IMR-90 (cell line): ENCODE measurements at regions of chr7 and their contacts with region 1.

Region 1: GRCh38 chr7:85554236-85555178 is 367.7 kb upstream of the SEMA3D start:
- DNase-seq: peak; percentile 82
- ATAC-seq: peak; percentile 84
- H3K4me3 ChIP-seq: no peak overlapping the region
- H3K27ac ChIP-seq: no peak overlapping the region
- H3K4me1 ChIP-seq: no peaks in the 10 kb centered on the region
- H3K27me3 ChIP-seq: no peaks in the 10 kb centered on the region
- CTCF ChIP-seq: peak; percentile 78
- POLR2A ChIP-seq: no peak
- RAD21 ChIP-seq: peak; percentile 82

Region 2: DNA sequence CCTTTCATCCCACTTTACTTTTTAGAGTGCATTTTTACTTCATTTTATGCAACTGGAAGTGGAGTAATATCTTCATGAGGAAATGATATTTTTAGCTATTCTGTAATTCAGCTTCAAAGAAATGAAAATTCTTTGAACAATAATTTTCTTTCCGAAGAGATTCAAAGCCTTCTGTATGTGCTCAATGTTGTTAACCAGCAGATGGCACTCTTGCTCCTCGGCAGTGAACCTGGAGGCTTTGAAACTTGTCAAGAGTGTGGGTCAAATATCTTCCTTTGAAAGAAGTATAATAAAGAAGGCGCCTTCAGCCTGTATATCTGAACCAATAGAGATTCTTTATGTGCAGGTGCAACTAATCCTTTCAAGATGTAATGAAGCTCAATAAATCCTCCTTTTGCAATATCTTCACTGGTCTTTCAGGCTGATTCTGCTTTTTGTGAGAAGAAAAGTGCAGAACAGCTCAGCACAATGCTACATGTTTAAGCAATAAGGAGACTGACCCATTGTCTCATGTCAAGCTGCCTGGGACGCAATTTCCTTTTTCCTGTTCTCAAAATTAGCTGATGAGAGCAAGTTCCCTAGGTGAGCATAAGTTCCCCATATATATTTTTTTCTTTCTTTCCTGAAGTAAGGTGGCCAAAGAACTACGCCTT is 1618.3 kb before region 1 on chr7:
- CTCF ChIA-PET with region 1: no interaction called
- POLR2A ChIA-PET with region 1: no interaction called
- dilution Hi-C with region 1: no loop called
- in situ Hi-C with region 1: no loop called
- intact Hi-C with region 1: loop called (anchors 10 kb)
- DNase-seq: peak; percentile 81
- ATAC-seq: peak; percentile 95
- H3K4me3 ChIP-seq: no peak overlapping the region
- H3K27ac ChIP-seq: no peak overlapping the region
- H3K4me1 ChIP-seq: no peaks in the 10 kb centered on the region
- H3K27me3 ChIP-seq: no peaks in the 10 kb centered on the region
- CTCF ChIP-seq: peak; percentile 93
- POLR2A ChIP-seq: no peak
- RAD21 ChIP-seq: peak; percentile 95

Region 3: DNA sequence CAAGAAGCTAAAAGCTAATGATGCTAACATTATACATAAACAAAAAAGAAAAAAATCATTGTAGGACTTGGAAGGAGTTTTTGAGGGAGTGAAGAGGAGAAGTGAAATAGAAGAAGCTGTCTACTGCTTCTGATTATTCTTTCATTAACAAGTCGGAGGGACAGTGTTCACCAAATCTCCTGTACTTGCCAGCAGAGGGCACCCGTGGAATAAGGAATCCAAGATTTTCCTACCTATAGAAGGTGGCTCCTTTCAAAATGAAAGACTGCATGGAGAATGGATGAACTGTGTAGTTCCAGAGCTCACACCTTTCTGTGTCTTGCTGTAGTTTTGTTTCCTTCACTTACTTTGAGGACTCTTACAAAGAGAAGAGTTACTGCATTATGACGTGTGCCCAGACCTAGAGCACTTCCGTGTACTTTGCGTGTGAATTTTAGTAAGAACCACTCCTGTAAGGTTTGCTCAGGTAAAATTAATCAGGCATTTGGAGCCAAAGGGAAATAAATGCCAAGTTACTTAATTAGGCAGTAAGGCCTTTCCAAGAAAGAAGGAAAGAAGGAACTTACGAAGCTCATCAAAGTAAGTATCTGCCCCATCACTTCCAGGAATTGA is 512.8 kb before region 1 on chr7:
- CTCF ChIA-PET with region 1: interaction called, 8 read pairs
- POLR2A ChIA-PET with region 1: no interaction called
- dilution Hi-C with region 1: no loop called
- in situ Hi-C with region 1: loop called (anchors 5 kb)
- intact Hi-C with region 1: loop called (anchors 1 kb)
- DNase-seq: peak; percentile 69
- ATAC-seq: peak; percentile 73
- H3K4me3 ChIP-seq: no peak overlapping the region
- H3K27ac ChIP-seq: no peak overlapping the region
- H3K4me1 ChIP-seq: no peaks in the 10 kb centered on the region
- H3K27me3 ChIP-seq: no peaks in the 10 kb centered on the region
- CTCF ChIP-seq: peak; percentile 86
- POLR2A ChIP-seq: no peak
- RAD21 ChIP-seq: peak; percentile 92

Region 4: GRCh38 chr7:85851571-85852193 is 297.2 kb after region 1 on chr7:
- CTCF ChIA-PET with region 1: no interaction called
- POLR2A ChIA-PET with region 1: no interaction called
- dilution Hi-C with region 1: no loop called
- in situ Hi-C with region 1: no loop called
- intact Hi-C with region 1: loop called (anchors 5 kb)
- DNase-seq: peak; percentile 69
- ATAC-seq: 0 out of 2 replicates have a peak, but pooled peaks have one; percentile 35
- H3K4me3 ChIP-seq: no peak overlapping the region
- H3K27ac ChIP-seq: no peak overlapping the region
- H3K4me1 ChIP-seq: no peaks in the 10 kb centered on the region
- H3K27me3 ChIP-seq: no peaks in the 10 kb centered on the region
- CTCF ChIP-seq: peak; percentile 57
- POLR2A ChIP-seq: no peak
- RAD21 ChIP-seq: peak; percentile 61